H1 (cell line): ENCODE measurements at regions of chr11 and their contacts with region 1.

Region 1: DNA sequence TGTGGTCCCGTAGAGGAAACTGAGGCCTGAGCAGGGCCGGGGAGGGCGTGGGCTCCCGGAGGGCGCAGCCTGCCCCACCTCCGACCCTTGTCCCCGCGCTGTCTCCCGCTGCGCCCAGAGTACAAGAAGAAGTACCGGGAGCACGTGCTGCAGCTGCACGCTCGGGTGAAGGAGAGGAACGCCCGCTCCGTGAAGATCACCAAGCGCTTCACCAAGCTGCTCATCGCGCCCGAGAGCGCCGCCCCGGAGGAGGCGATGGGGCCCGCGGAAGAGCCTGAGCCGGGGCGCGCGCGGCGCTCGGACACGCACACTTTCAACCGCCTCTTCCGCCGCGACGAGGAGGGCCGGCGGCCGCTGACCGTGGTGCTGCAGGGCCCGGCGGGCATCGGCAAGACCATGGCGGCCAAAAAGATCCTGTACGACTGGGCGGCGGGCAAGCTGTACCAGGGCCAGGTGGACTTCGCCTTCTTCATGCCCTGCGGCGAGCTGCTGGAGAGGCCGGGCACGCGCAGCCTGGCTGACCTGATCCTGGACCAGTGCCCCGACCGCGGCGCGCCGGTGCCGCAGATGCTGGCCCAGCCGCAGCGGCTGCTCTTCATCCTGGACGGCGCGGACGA is 1.9 kb downstream of the NLRP6 start:
- DNase-seq: peak in 1 of 2 experiments; percentile 49
- H3K4me3 ChIP-seq: no peak overlapping the region
- H3K27ac ChIP-seq: no peak overlapping the region
- H3K4me1 ChIP-seq: peaks cover 0 to 5% (median under 1%) of the 10 kb centered on the region in 4 experiments; a peak in 5 of 7 replicates
- H3K27me3 ChIP-seq: peaks cover 0 to 3% (median 1%) of the 10 kb centered on the region in 4 experiments; a peak in 2 of 7 replicates
- CTCF ChIP-seq: no peak
- EP300 ChIP-seq: no peak
- POLR2A ChIP-seq: no peak
- RAD21 ChIP-seq: no peak

Region 2: GRCh38 chr11:269146-269890 is 10.8 kb before region 1 on chr11:
- CTCF ChIA-PET with region 1: interaction called, 4 read pairs
- POLR2A ChIA-PET with region 1: interaction called, 11 read pairs
- DNase-seq: no peak
- H3K4me3 ChIP-seq: peak overlapping the region in 1 of 4 experiments; percentile 1; a peak in 1 of 8 replicates
- H3K27ac ChIP-seq: no peak overlapping the region; the same call in 1 of the 2 replicates
- H3K4me1 ChIP-seq: peaks cover 4 to 20% (median 13%) of the 10 kb centered on the region in 4 experiments
- H3K27me3 ChIP-seq: no peaks in the 10 kb centered on the region
- CTCF ChIP-seq: no peak
- EP300 ChIP-seq: no peak
- POLR2A ChIP-seq: no peak
- RAD21 ChIP-seq: no peak